ENCODE measurements at regions of chr1 and their contacts with region 1.

Region 1: GRCh38 chr1:58783993-58784757 is at the start of gene JUN:
- DNase-seq: peak; percentile 100
- ATAC-seq: peak; percentile 85 to 91
- total RNA-seq, gene JUN: 67.6 to 78.0 TPM

Region 2: GRCh38 chr1:57824535-57824934 is 959.6 kb before region 1 on chr1:
- intact Hi-C with region 1: no loop called
- DNase-seq: no peak
- ATAC-seq: no peak

Region 3: GRCh38 chr1:58409890-58410289 is 374.3 kb before region 1 on chr1:
- intact Hi-C with region 1: no loop called
- DNase-seq: no peak
- ATAC-seq: no peak

Region 4: GRCh38 chr1:58816072-58816746 is 32.0 kb after region 1 on chr1:
- intact Hi-C with region 1: loop called in 1 of 2 experiments (anchors 5 kb)
- DNase-seq: peak; percentile 93
- ATAC-seq: peak; percentile 93

Region 5: DNA sequence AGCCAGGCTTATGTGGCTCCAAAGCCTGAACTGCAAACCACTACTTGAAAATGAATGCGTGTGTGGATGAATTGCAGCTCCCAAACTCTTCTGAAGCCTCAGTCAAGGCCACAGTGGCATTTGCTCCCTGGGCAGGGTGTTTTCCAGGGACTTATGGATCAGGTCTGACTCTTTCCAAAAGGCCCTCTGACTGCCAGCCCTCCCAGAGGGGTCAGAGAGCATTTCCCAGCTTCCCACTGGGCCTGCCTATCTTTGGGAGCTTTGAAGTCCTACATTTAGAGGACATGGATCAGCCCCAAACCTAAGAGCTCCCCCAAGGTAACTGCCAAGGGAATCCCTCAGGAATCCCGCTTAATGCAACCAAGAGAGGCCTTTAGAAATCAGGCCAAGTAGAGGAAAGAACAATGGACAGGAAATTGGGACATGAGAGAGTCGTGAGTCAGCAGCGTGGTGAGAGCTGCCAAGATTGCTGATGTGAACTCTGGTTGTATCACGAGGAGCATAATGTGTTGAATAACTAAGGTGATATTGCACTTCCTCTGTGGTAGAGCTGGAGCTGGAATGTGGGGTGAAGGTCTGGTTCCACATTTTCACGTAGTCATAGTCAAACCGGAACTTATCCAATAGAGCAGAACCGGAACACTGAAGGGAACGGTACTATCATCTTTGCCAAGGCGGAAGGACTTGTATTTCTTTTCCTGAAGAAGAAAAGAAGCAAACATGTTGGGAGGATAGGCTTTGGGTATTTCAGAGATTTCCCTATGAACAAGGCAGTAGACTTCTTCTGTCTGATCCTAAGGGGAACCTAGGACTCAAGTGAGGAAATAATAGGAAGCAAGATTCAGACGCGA is 99.1 kb after region 1 on chr1:
- intact Hi-C with region 1: loop called in 1 of 2 experiments (anchors 5 kb)
- DNase-seq: peak; percentile 86
- ATAC-seq: peak; percentile 53 to 81

Region 6: GRCh38 chr1:59150577-59151391 is 366.6 kb after region 1 on chr1:
- intact Hi-C with region 1: loop called in 1 of 2 experiments (anchors 2 kb)
- DNase-seq: peak; percentile 86
- ATAC-seq: peak; percentile 92 to 98

Region 7: GRCh38 chr1:59296358-59297256 is 512.4 kb after region 1 on chr1 and contains the start of gene FGGY:
- intact Hi-C with region 1: loop called (anchors 1 to 10 kb)
- DNase-seq: peak; percentile 99
- ATAC-seq: peak; percentile 94 to 96
- total RNA-seq, gene FGGY: 14.0 to 21.6 TPM

Region 8: GRCh38 chr1:59707178-59707791 is 923.1 kb after region 1 on chr1:
- intact Hi-C with region 1: loop called in 1 of 2 experiments (anchors 5 kb)
- DNase-seq: peak; percentile 54
- ATAC-seq: peak; percentile 86 to 96

Region 9: DNA sequence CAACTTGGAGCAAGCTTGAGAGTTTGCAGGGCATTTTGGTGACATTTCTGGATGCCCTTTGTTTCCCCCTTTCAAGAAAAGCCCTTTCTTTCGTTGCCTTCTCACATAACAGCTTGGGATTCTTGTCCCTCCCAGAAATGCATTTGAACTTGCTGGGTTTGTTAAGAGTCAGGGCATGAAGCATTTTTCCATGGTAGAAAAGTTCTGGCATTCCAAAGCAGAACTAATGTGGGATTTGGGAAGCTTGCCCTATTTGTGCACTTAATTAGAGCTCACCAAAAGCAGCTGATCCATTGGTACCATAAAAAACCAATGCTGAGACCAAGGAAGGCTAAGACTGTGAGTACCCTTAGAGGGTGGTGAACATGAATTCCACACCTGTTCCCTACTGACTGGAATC is 930.8 kb after region 1 on chr1:
- intact Hi-C with region 1: loop called in 1 of 2 experiments (anchors 5 kb)
- DNase-seq: no peak
- ATAC-seq: no peak